MCF 10A (cell line): ENCODE measurements at regions of chr9 and their contacts with region 1.

Region 1: GRCh38 chr9:122498883-122499288 is 11.7 kb upstream of the OR1J2 start:
- DNase-seq: peak; percentile 82
- H3K4me3 Mint-ChIP-seq: no peak overlapping the region
- H3K27ac Mint-ChIP-seq: no peak overlapping the region
- H3K4me1 Mint-ChIP-seq: no peaks in the 10 kb centered on the region
- H3K27me3 Mint-ChIP-seq: no peaks in the 10 kb centered on the region
- CTCF ChIP-seq: peak; percentile 72

Region 2: DNA sequence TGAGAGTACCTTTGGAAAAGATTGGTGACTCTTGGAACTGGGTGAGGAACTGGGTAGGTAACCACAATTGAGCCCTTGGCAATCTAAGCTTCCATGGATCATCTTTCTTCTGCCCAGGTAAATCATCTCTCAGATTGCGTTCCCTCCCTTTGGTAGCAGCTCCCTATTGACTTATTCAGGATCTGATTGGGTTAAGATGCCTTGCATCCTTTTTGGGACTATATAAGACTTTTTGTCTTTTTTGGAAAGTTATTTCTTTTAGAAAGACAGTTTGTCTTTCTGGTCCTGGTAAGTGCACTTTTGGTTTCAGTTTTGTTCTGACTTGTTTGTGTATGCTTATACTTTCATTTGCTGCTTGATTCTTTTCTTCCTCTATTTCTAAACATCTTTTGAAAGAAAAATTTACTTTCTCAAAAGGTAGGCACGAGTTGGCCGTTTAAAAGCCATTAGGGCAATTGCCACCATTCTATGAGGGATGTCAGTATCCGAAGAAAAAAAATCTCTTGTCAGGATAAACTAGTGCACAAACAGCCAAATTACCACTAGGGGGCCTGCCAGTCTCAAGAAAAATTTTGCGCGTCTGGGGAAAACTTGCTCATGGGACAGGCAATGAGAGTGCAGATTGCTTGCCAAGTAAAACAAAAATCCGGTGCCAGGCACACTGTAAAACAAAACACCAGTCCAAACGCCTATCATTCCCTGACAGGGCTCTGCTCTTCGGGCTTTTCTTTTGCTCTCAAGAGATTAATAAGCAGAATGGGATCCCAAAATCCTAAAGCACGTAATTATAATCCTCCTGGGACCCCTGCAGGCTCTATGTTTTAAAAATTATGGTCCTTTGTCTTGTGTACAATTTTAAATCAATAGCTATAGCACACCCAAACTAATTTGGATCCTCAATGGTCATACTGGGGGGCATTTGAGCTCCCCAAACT is 34.0 kb before region 1 on chr9:
- CTCF ChIA-PET with region 1: interaction called, 27 read pairs
- POLR2A ChIA-PET with region 1: no interaction called
- intact Hi-C with region 1: no loop called
- DNase-seq: peak; percentile 95
- H3K4me3 Mint-ChIP-seq: peak overlapping the region; percentile 71
- H3K27ac Mint-ChIP-seq: peak overlapping the region; percentile 41
- H3K4me1 Mint-ChIP-seq: peaks cover 5% of the 10 kb centered on the region
- H3K27me3 Mint-ChIP-seq: peaks cover 71% of the 10 kb centered on the region
- CTCF ChIP-seq: peak; percentile 78